ENCODE measurements at regions of chr2 and their contacts with region 1.

Region 1: DNA sequence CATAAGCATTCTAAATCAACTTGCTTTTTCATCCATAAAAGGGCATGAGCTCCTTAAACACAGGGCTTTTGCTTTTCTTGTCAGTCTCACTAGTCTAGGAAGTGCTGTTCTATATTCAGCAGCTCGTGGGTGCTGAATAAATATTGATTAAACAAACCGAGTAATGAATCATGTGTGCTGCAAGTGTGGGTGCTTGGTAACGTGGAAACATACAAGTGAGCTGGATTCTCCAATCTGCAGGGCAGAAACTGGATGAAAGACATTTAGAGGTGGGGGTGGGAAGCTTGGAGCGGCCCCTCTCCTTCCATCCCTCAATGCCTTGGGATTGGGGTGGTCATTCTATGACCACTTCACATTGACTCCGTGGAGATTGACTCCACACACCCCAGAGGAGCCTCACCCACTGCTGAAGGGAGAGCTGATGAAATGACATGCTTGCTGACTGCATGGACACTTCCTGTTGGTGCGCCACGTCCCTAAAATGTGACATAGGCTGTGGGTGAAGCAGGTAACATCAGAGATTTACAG is 114.6 kb downstream of the DOCK10 start:
- DNase-seq: peak; percentile 81
- H3K4me3 Mint-ChIP-seq: peak overlapping the region; percentile 60
- H3K27ac Mint-ChIP-seq: peak overlapping the region; percentile 89
- H3K4me1 Mint-ChIP-seq: peaks cover 97% of the 10 kb centered on the region
- H3K27me3 Mint-ChIP-seq: no peaks in the 10 kb centered on the region

Region 2: GRCh38 chr2:224946895-224947294 is 19.2 kb after region 1 on chr2:
- CTCF ChIA-PET with region 1: interaction called, 25 read pairs
- POLR2A ChIA-PET with region 1: interaction called, 5 read pairs
- DNase-seq: peak; percentile 34
- H3K4me3 Mint-ChIP-seq: peak overlapping the region; percentile 84
- H3K27ac Mint-ChIP-seq: peak overlapping the region; percentile 92
- H3K4me1 Mint-ChIP-seq: peaks cover 75% of the 10 kb centered on the region
- H3K27me3 Mint-ChIP-seq: no peaks in the 10 kb centered on the region

Region 3: GRCh38 chr2:225002039-225002655 is 74.4 kb after region 1 on chr2:
- CTCF ChIA-PET with region 1: interaction called, 11 read pairs
- POLR2A ChIA-PET with region 1: no interaction called
- DNase-seq: peak; percentile 80
- H3K4me3 Mint-ChIP-seq: no peak overlapping the region
- H3K27ac Mint-ChIP-seq: peak overlapping the region; percentile 77
- H3K4me1 Mint-ChIP-seq: peaks cover 74% of the 10 kb centered on the region
- H3K27me3 Mint-ChIP-seq: no peaks in the 10 kb centered on the region